Motor neuron (in vitro differentiated cells): ENCODE measurements at regions of chr18 and their contacts with region 1.

Region 1: GRCh38 chr18:33440060-33441043 is at the start of gene CCDC178:
- ATAC-seq: peak; percentile 90 to 96 (median 92)
- H3K4me3 ChIP-seq: peak within 1 kb of the TSS; percentile 51 to 78 (median 66)
- H3K27ac ChIP-seq: no peak within 1 kb of the TSS
- H3K4me1 ChIP-seq: peaks cover 3 to 22% of the 10 kb centered on the region in 2 donors
- total RNA-seq, gene CCDC178: 0.09 to 3.0 (median 0.21) TPM in 5 of 8 experiments, not detected in the others

Region 2: GRCh38 chr18:32877371-32877770 is 563.0 kb before region 1 on chr18:
- in situ Hi-C with region 1: no loop called
- ATAC-seq: no peak
- H3K4me3 ChIP-seq: no peak overlapping the region
- H3K27ac ChIP-seq: no peak overlapping the region
- H3K4me1 ChIP-seq: peaks cover 2 to 18% of the 10 kb centered on the region in 2 donors

Region 3: GRCh38 chr18:33210575-33211189 is 229.7 kb before region 1 on chr18:
- in situ Hi-C with region 1: no loop called
- ATAC-seq: peak in 4 of 8 experiments; percentile 42 to 48 (median 44)
- H3K4me3 ChIP-seq: no peak overlapping the region
- H3K27ac ChIP-seq: no peak overlapping the region
- H3K4me1 ChIP-seq: no peaks in the 10 kb centered on the region

Region 4: GRCh38 chr18:33761363-33761762 is 321.0 kb after region 1 on chr18:
- in situ Hi-C with region 1: loop called in 1 of 9 experiments (anchors 25 kb)
- ATAC-seq: peak in 4 of 8 experiments; percentile 46 to 73 (median 58)
- H3K4me3 ChIP-seq: no peak overlapping the region
- H3K27ac ChIP-seq: no peak overlapping the region
- H3K4me1 ChIP-seq: no peaks in the 10 kb centered on the region